ENCODE measurements at regions of chr2 and their contacts with region 1.

Region 1: GRCh38 chr2:170815746-170816503 is 762 bp upstream of the GAD1 start:
- DNase-seq: no peak
- ATAC-seq: peak; percentile 75
- H3K4me3 ChIP-seq: peak overlapping the region; percentile 54
- H3K27ac ChIP-seq: no peak overlapping the region
- H3K4me1 ChIP-seq: peaks cover 11% of the 10 kb centered on the region
- H3K27me3 ChIP-seq: peaks cover 5 to 34% of the 10 kb centered on the region in 2 experiments
- CTCF ChIP-seq: peak; percentile 65 to 79 (median 78)
- EP300 ChIP-seq: no peak
- POLR2A ChIP-seq: no peak
- RAD21 ChIP-seq: peak; percentile 80

Region 2: GRCh38 chr2:169933124-169933711 is 882.7 kb before region 1 on chr2:
- CTCF ChIA-PET with region 1: interaction called, 5 read pairs
- POLR2A ChIA-PET with region 1: no interaction called
- RAD21 ChIA-PET with region 1: interaction called, 7 read pairs
- SMC1A ChIA-PET with region 1: interaction called, 6 read pairs
- in situ Hi-C with region 1: loop called (anchors 5 kb)
- intact Hi-C with region 1: loop called (anchors 5 kb)
- DNase-seq: no peak
- ATAC-seq: peak; percentile 82
- H3K4me3 ChIP-seq: no peak overlapping the region
- H3K27ac ChIP-seq: no peak overlapping the region
- H3K4me1 ChIP-seq: no peaks in the 10 kb centered on the region
- H3K27me3 ChIP-seq: no peaks in the 10 kb centered on the region
- CTCF ChIP-seq: peak; percentile 67 to 79 (median 70)
- EP300 ChIP-seq: no peak
- POLR2A ChIP-seq: no peak
- RAD21 ChIP-seq: peak; percentile 92

Region 3: GRCh38 chr2:170298115-170298514 is 517.8 kb before region 1 on chr2:
- CTCF ChIA-PET with region 1: no interaction called
- POLR2A ChIA-PET with region 1: no interaction called
- RAD21 ChIA-PET with region 1: no interaction called
- SMC1A ChIA-PET with region 1: no interaction called
- in situ Hi-C with region 1: no loop called
- intact Hi-C with region 1: no loop called
- DNase-seq: peak; percentile 47
- ATAC-seq: peak; percentile 99
- H3K4me3 ChIP-seq: no peak overlapping the region
- H3K27ac ChIP-seq: no peak overlapping the region
- H3K4me1 ChIP-seq: no peaks in the 10 kb centered on the region
- H3K27me3 ChIP-seq: no peaks in the 10 kb centered on the region
- CTCF ChIP-seq: no peak
- EP300 ChIP-seq: peak in 1 of 2 experiments; percentile 41; a peak in 1 of 4 replicates
- POLR2A ChIP-seq: no peak
- RAD21 ChIP-seq: no peak

Region 4: DNA sequence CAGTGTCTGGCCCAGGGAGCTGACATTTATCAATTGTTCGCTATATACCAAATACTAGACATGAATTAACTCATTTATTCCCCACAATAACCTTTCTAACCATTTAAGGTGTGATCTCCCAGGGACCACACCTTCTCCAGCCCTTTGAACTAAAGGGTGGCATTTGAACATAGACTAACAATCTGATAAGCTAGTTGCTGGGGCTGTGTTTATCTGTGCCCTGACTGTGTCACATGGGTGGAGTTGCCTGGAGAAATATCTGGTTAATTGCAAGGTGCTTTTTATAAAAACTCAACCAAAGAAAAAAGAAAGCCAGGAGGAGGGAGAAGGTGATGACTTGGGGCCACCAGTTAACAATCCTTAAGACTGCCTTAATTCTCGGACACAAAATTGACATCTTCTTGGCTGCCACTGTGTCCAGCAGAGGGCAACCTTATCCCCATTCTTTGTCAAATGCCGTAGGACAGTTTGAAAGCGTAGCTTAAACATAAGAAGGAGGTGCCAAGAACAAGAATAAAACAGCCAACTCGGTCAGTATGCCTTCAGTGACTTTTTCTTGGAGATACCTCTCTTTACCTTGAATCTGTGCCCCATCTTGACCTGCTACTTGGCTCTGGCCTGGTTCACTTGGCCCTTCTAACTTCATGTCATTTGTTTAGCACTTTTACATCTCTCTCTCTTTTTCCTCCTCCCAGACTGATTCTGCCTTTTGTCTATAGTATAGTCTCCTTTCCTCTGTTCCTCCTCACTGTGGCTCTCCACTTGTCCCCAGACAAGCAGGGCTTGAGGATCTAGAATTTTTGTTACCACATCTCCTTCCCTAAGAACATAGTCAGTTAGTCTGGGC is 454.6 kb before region 1 on chr2:
- CTCF ChIA-PET with region 1: interaction called, 67 read pairs
- POLR2A ChIA-PET with region 1: interaction called, 3 read pairs
- RAD21 ChIA-PET with region 1: interaction called, 13 read pairs
- SMC1A ChIA-PET with region 1: interaction called, 53 read pairs
- in situ Hi-C with region 1: loop called (anchors 5 kb)
- intact Hi-C with region 1: loop called (anchors 2 kb)
- DNase-seq: peak; percentile 26
- ATAC-seq: peak; percentile 97
- H3K4me3 ChIP-seq: no peak overlapping the region
- H3K27ac ChIP-seq: no peak overlapping the region
- H3K4me1 ChIP-seq: no peaks in the 10 kb centered on the region
- H3K27me3 ChIP-seq: no peaks in the 10 kb centered on the region
- CTCF ChIP-seq: peak; percentile 76 to 87 (median 80)
- EP300 ChIP-seq: no peak
- POLR2A ChIP-seq: no peak
- RAD21 ChIP-seq: peak; percentile 65

Region 5: DNA sequence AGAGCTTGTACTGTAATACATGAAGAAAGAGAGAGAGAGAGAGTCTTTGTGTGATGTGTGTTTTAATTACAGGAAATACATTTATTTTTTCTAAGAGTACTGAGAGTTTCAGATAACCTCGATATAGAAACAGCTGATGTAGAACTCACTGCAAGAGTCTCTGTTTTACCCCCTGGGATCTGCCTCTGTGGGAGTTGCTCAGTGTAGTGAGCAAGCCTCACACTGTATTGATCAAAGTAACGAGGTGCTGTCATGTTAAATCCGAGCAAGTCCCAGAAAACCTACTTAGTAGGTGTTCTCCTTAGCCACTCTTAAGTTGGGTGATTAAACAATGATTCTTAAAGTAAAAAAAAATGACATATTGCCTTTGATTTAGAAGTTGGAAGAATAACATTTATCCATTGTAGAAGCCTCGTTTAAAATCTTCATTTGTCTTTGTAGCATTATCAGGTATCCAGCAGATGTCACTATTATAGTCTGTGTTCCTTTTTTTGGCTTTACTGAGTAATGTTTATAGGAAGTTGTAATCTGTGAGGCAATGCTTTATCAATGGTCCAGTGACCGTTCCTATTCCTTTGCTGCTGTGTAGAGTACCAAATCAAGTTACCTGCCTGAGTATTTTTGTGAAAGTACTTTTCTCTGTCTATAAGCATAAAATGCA is 419.0 kb before region 1 on chr2:
- CTCF ChIA-PET with region 1: interaction called, 57 read pairs
- POLR2A ChIA-PET with region 1: interaction called, 5 read pairs
- RAD21 ChIA-PET with region 1: interaction called, 5 read pairs
- SMC1A ChIA-PET with region 1: interaction called, 25 read pairs
- in situ Hi-C with region 1: no loop called
- intact Hi-C with region 1: loop called (anchors 1 kb)
- DNase-seq: no peak
- ATAC-seq: peak; percentile 71
- H3K4me3 ChIP-seq: no peak overlapping the region
- H3K27ac ChIP-seq: no peak overlapping the region
- H3K4me1 ChIP-seq: no peaks in the 10 kb centered on the region; the same call in 1 of the 2 replicates
- H3K27me3 ChIP-seq: no peaks in the 10 kb centered on the region
- CTCF ChIP-seq: peak; percentile 27 to 51 (median 46); a peak in 3 of 6 replicates
- EP300 ChIP-seq: no peak
- POLR2A ChIP-seq: no peak
- RAD21 ChIP-seq: peak; percentile 47

Region 6: DNA sequence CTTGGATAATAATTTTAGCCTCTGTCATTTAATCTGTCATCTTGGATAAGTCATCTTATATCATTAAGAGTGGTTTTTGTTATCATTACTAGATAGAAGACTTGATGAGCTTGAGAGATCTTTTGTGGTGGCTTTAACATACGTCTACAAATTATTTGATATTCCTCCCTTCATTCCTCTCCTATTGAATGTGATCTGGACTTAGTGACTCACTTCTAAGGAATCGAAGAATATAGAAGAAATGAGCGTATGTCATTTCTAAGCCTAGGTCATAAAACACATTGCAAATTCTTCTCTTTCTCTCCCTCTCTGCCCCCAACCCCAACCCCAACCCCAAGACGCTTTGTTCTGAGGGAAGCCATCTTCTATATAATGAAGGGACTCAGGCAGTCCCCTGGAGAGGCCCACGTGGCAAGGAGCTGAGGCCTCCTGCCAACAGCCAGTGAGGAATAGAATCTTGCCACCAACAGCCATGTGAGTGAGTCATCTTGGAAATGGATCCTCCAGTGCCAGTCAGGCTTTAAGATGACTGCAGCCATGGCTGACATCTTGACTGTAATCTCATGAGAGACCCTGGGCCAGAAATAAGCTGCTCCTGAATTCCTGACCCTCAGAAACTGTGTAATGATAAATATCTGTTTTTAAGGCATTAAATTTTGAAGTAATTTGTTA is 322.4 kb before region 1 on chr2:
- CTCF ChIA-PET with region 1: interaction called, 20 read pairs
- POLR2A ChIA-PET with region 1: no interaction called
- RAD21 ChIA-PET with region 1: interaction called, 3 read pairs
- SMC1A ChIA-PET with region 1: interaction called, 16 read pairs
- in situ Hi-C with region 1: no loop called
- intact Hi-C with region 1: loop called (anchors 10 kb)
- DNase-seq: no peak
- ATAC-seq: no peak
- H3K4me3 ChIP-seq: no peak overlapping the region
- H3K27ac ChIP-seq: no peak overlapping the region
- H3K4me1 ChIP-seq: no peaks in the 10 kb centered on the region
- H3K27me3 ChIP-seq: no peaks in the 10 kb centered on the region
- CTCF ChIP-seq: no peak
- EP300 ChIP-seq: no peak
- POLR2A ChIP-seq: no peak
- RAD21 ChIP-seq: no peak

Region 7: GRCh38 chr2:170739048-170739447 is 76.9 kb before region 1 on chr2:
- CTCF ChIA-PET with region 1: interaction called, 15 read pairs
- POLR2A ChIA-PET with region 1: interaction called, 3 read pairs
- RAD21 ChIA-PET with region 1: no interaction called
- SMC1A ChIA-PET with region 1: interaction called, 4 read pairs
- in situ Hi-C with region 1: no loop called
- intact Hi-C with region 1: no loop called
- DNase-seq: no peak
- ATAC-seq: no peak
- H3K4me3 ChIP-seq: no peak overlapping the region
- H3K27ac ChIP-seq: no peak overlapping the region
- H3K4me1 ChIP-seq: no peaks in the 10 kb centered on the region
- H3K27me3 ChIP-seq: peaks cover 0 to 2% of the 10 kb centered on the region in 2 experiments; a peak in 1 of 4 replicates
- CTCF ChIP-seq: no peak
- EP300 ChIP-seq: no peak
- POLR2A ChIP-seq: no peak
- RAD21 ChIP-seq: no peak